ENCODE measurements at regions of chr10 and their contacts with region 1.

Region 1: GRCh38 chr10:127853868-127854768 is 38.6 kb downstream of the CLRN3 start:
- DNase-seq: peak; percentile 23 to 69 (median 34)
- ATAC-seq: peak; percentile 52
- H3K4me3 ChIP-seq: no peak overlapping the region
- H3K4me3 Mint-ChIP-seq: no peak overlapping the region
- H3K27ac ChIP-seq: no peak overlapping the region
- H3K27ac Mint-ChIP-seq: no peak overlapping the region
- H3K4me1 ChIP-seq: peaks cover 4% of the 10 kb centered on the region
- H3K4me1 Mint-ChIP-seq: peaks cover 6% of the 10 kb centered on the region
- H3K27me3 ChIP-seq: peaks cover 0 to 5% of the 10 kb centered on the region in 2 experiments
- H3K27me3 Mint-ChIP-seq: peaks cover 5% of the 10 kb centered on the region
- CTCF ChIP-seq: peak; percentile 87

Region 2: GRCh38 chr10:125868372-125868975 is 1985.6 kb before region 1 on chr10:
- CTCF ChIA-PET with region 1: interaction called, 8 read pairs
- POLR2A ChIA-PET with region 1: no interaction called
- intact Hi-C with region 1: loop called (anchors 1 to 5 kb)
- DNase-seq: peak in 4 of 14 experiments; percentile 17 to 53 (median 34)
- ATAC-seq: no peak
- H3K4me3 ChIP-seq: no peak overlapping the region
- H3K4me3 Mint-ChIP-seq: no peak overlapping the region
- H3K27ac ChIP-seq: no peak overlapping the region
- H3K27ac Mint-ChIP-seq: no peak overlapping the region
- H3K4me1 ChIP-seq: no peaks in the 10 kb centered on the region
- H3K4me1 Mint-ChIP-seq: no peaks in the 10 kb centered on the region
- H3K27me3 ChIP-seq: no peaks in the 10 kb centered on the region
- H3K27me3 Mint-ChIP-seq: no peaks in the 10 kb centered on the region
- CTCF ChIP-seq: peak; percentile 89

Region 3: DNA sequence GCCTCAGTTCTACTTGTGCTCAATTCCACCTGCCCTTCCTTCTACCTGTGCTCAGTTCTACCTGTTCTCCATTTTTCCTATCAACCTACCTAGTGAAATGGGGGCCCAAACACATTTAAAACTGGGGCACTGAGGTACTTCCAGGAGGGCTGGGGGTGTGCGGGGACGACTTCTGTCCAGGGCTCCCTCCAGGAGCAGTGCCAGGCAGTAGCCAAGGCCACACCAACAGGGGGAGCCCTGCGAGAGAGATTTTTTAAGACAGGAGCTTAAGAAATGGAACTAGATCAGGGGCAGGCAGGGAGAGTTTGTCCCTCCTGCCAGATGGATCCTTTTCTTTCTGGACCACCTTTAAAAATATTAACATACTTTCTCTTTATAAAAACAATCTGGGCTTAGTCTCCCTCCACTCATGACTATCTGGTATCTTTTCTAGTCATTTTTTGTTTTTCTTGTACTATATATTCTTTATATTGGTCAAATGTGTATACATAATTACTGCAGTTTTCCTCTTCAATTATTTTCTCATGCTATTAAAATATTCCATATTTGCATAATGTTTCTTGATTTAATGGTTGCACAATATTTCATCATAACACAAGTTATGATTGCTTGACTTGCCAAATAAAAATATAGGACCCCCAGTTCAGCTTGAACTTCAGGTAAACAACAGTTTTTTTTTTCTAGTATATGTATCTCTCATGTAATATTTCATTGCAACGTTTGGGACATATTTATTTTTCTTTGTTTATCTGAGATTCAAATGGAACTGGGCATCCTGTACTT is 610.4 kb before region 1 on chr10:
- CTCF ChIA-PET with region 1: no interaction called
- POLR2A ChIA-PET with region 1: no interaction called
- intact Hi-C with region 1: loop called (anchors 5 to 10 kb)
- DNase-seq: peak in 11 of 14 experiments; percentile 8 to 51 (median 13)
- ATAC-seq: no peak
- H3K4me3 ChIP-seq: no peak overlapping the region
- H3K4me3 Mint-ChIP-seq: no peak overlapping the region
- H3K27ac ChIP-seq: no peak overlapping the region
- H3K27ac Mint-ChIP-seq: no peak overlapping the region
- H3K4me1 ChIP-seq: no peaks in the 10 kb centered on the region
- H3K4me1 Mint-ChIP-seq: no peaks in the 10 kb centered on the region
- H3K27me3 ChIP-seq: no peaks in the 10 kb centered on the region
- H3K27me3 Mint-ChIP-seq: peaks cover 22% of the 10 kb centered on the region
- CTCF ChIP-seq: peak; percentile 48

Region 4: GRCh38 chr10:127715782-127716378 is 138.2 kb before region 1 on chr10:
- CTCF ChIA-PET with region 1: no interaction called
- POLR2A ChIA-PET with region 1: no interaction called
- intact Hi-C with region 1: loop called in 1 of 2 experiments (anchors 2 kb)
- DNase-seq: peak in 2 of 14 experiments; percentile 19 to 24
- ATAC-seq: no peak
- H3K4me3 ChIP-seq: no peak overlapping the region
- H3K4me3 Mint-ChIP-seq: no peak overlapping the region
- H3K27ac ChIP-seq: no peak overlapping the region
- H3K27ac Mint-ChIP-seq: no peak overlapping the region
- H3K4me1 ChIP-seq: no peaks in the 10 kb centered on the region
- H3K4me1 Mint-ChIP-seq: no peaks in the 10 kb centered on the region
- H3K27me3 ChIP-seq: peaks cover 2 to 4% of the 10 kb centered on the region in 2 experiments
- H3K27me3 Mint-ChIP-seq: peaks cover 7% of the 10 kb centered on the region
- CTCF ChIP-seq: peak; percentile 34

Region 5: GRCh38 chr10:128069351-128070051 is 215.4 kb after region 1 on chr10:
- CTCF ChIA-PET with region 1: no interaction called
- POLR2A ChIA-PET with region 1: no interaction called
- intact Hi-C with region 1: no loop called
- DNase-seq: peak; percentile 70 to 92 (median 78)
- ATAC-seq: peak; percentile 55
- H3K4me3 ChIP-seq: no peak overlapping the region
- H3K4me3 Mint-ChIP-seq: no peak overlapping the region
- H3K27ac ChIP-seq: no peak overlapping the region
- H3K27ac Mint-ChIP-seq: peak overlapping the region; percentile 59
- H3K4me1 ChIP-seq: peaks cover 44% of the 10 kb centered on the region
- H3K4me1 Mint-ChIP-seq: peaks cover 48% of the 10 kb centered on the region
- H3K27me3 ChIP-seq: no peaks in the 10 kb centered on the region
- H3K27me3 Mint-ChIP-seq: no peaks in the 10 kb centered on the region
- CTCF ChIP-seq: peak; percentile 90